H1 (cell line): ENCODE measurements at regions of chr11 and their contacts with region 1.

Region 1: DNA sequence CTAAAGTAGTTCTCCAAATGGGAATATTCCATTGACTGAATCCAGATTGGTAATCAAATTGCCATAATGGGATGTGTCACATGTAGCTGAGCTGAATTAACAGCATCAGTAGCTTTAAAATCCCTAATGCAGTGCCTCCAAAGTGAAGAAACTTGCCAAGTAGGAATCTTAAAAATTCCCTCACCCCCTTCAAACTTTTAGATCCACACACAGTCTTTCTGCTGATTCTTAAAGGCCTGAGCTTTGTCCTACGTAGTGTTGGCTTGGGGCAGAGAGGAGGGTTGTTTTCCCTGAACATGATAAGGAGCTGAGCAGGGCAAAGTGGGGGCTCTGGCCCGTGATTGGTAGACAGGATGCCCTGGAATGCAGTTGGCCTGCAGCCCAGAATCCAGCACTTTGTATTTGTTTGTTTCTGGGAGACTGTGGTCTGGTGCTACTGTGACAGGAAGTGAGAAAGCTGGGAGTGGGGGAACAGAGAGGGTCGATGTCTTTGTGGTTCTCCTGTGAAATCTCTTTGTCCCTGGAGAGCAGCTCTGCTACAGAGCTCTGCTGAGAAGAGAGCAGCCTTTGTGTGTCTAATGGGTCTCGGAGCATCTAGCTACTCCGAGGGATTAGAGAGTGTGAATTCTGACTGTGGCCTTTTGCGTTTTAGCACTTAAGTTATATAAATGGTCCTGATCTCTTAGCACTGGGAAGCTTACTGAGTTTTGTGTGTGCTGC is 16.9 kb downstream of the CTNND1 start:
- DNase-seq: peak; percentile 71 to 79
- H3K4me3 ChIP-seq: peak overlapping the region in 3 of 4 experiments; percentile 5 to 39 (median 16); a peak in 4 of 8 replicates
- H3K27ac ChIP-seq: peak overlapping the region; percentile 89
- H3K4me1 ChIP-seq: peaks cover 23 to 44% (median 38%) of the 10 kb centered on the region in 4 experiments
- H3K27me3 ChIP-seq: no peaks in the 10 kb centered on the region
- CTCF ChIP-seq: no peak
- EP300 ChIP-seq: 0 out of 3 replicates have a peak, but pooled peaks of 1 of the 2 experiments have one; percentile 19
- POLR2A ChIP-seq: peak; percentile 83 to 91
- RAD21 ChIP-seq: peak in 1 of 2 experiments; percentile 0; a peak in 1 of 4 replicates

Region 2: GRCh38 chr11:57619331-57619730 is 159.1 kb before region 1 on chr11:
- CTCF ChIA-PET with region 1: no interaction called
- POLR2A ChIA-PET with region 1: no interaction called
- DNase-seq: no peak
- H3K4me3 ChIP-seq: no peak overlapping the region
- H3K27ac ChIP-seq: no peak overlapping the region
- H3K4me1 ChIP-seq: no peaks in the 10 kb centered on the region
- H3K27me3 ChIP-seq: no peaks in the 10 kb centered on the region
- CTCF ChIP-seq: peak in 2 of 3 experiments; percentile 52 to 72; a peak in 3 of 4 replicates
- EP300 ChIP-seq: no peak
- POLR2A ChIP-seq: no peak
- RAD21 ChIP-seq: peak; percentile 38 to 61

Region 3: GRCh38 chr11:57638005-57638781 is 140.3 kb before region 1 on chr11:
- CTCF ChIA-PET with region 1: no interaction called
- POLR2A ChIA-PET with region 1: interaction called, 10 read pairs
- DNase-seq: peak; percentile 86 to 89
- H3K4me3 ChIP-seq: peak overlapping the region; percentile 94 to 100 (median 98)
- H3K27ac ChIP-seq: peak overlapping the region; percentile 98
- H3K4me1 ChIP-seq: peaks cover 11 to 31% (median 22%) of the 10 kb centered on the region in 4 experiments
- H3K27me3 ChIP-seq: no peaks in the 10 kb centered on the region; a peak in 1 of 7 replicates
- CTCF ChIP-seq: no peak
- EP300 ChIP-seq: peak in 1 of 2 experiments; percentile 64; a peak in 1 of 3 replicates
- POLR2A ChIP-seq: peak; percentile 94 to 95
- RAD21 ChIP-seq: no peak

Region 4: DNA sequence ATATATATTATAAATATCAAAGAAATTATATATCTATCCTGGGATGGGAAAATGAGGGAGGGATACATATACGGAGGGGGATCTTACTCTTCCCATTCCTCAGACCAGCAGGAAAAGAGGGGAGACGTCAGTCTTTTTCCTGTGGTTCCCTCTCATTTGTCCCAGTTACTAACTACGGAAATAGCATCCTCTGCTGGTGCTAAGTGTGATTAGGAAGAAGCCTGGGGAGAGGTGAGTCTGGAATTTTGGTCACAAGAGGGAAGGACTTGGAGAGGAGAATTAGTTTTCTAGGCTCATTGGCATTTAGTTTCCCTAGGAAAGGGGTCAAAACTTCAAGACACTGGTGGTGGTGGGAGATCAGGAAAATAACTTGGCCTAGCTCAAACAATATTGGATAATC is 78.1 kb before region 1 on chr11:
- CTCF ChIA-PET with region 1: no interaction called
- POLR2A ChIA-PET with region 1: no interaction called
- DNase-seq: no peak
- H3K4me3 ChIP-seq: no peak overlapping the region
- H3K27ac ChIP-seq: no peak overlapping the region
- H3K4me1 ChIP-seq: no peaks in the 10 kb centered on the region
- H3K27me3 ChIP-seq: no peaks in the 10 kb centered on the region
- CTCF ChIP-seq: peak in 1 of 3 experiments; percentile 36; a peak in 1 of 4 replicates
- EP300 ChIP-seq: no peak
- POLR2A ChIP-seq: no peak
- RAD21 ChIP-seq: peak in 1 of 2 experiments; percentile 33; a peak in 1 of 4 replicates

Region 5: DNA sequence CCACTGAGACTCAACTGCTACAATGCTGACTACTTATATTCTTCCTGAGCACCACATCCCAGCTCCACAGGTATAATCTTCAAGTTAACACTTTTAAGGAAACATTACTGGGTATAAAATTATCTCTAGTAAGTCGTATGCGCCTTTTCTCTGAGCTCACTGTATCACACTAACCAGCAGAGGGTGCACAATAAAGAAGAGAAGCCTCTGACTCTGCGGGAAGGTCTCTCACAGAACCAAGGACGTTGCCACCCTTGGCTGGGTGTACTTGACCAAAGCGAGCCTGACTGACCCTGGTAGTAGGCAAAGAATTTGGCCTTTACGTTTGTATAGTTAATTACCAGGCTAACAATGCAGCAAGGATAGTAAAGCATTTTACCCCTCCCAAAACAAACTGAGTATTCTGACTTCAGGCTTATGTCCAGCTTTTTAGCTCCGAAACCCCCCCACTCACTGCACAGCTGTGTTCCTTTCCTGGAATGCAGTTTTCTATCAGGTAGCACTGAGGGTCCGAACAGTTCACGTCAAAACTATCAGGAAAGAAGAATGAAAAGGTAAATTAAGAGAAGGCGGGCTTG is 26.7 kb before region 1 on chr11 and contains the start of gene BTBD18:
- CTCF ChIA-PET with region 1: interaction called, 16 read pairs
- POLR2A ChIA-PET with region 1: interaction called, 329 read pairs
- DNase-seq: peak in 1 of 2 experiments; percentile 54
- H3K4me3 ChIP-seq: no peak within 1 kb of the TSS
- H3K27ac ChIP-seq: no peak within 1 kb of the TSS; the same call in 1 of the 2 replicates
- H3K4me1 ChIP-seq: no peaks in the 10 kb centered on the region; a peak in 1 of 7 replicates
- H3K27me3 ChIP-seq: no peaks in the 10 kb centered on the region
- CTCF ChIP-seq: peak in 2 of 3 experiments; percentile 58 to 61; a peak in 3 of 4 replicates
- EP300 ChIP-seq: no peak
- POLR2A ChIP-seq: no peak
- RAD21 ChIP-seq: peak; percentile 62 to 78
- total RNA-seq, gene BTBD18: not detected in 2 replicates

Region 6: GRCh38 chr11:57761301-57762234 is 16.9 kb before region 1 on chr11 and contains the start of gene CTNND1:
- CTCF ChIA-PET with region 1: interaction called, 86 read pairs
- POLR2A ChIA-PET with region 1: interaction called, 329 read pairs
- DNase-seq: peak; percentile 71 to 84
- H3K4me3 ChIP-seq: peak within 1 kb of the TSS; percentile 88 to 97 (median 91)
- H3K27ac ChIP-seq: peak within 1 kb of the TSS; percentile 93
- H3K4me1 ChIP-seq: peaks cover 0 to 10% (median 2%) of the 10 kb centered on the region in 4 experiments; a peak in 1 of 7 replicates
- H3K27me3 ChIP-seq: no peaks in the 10 kb centered on the region
- CTCF ChIP-seq: no peak
- EP300 ChIP-seq: no peak; a peak in 1 of 3 replicates
- POLR2A ChIP-seq: peak; percentile 84 to 91
- RAD21 ChIP-seq: peak; percentile 3; a peak in 1 of 4 replicates
- total RNA-seq, gene CTNND1: 164 and 167 TPM in 2 replicates

Region 7: DNA sequence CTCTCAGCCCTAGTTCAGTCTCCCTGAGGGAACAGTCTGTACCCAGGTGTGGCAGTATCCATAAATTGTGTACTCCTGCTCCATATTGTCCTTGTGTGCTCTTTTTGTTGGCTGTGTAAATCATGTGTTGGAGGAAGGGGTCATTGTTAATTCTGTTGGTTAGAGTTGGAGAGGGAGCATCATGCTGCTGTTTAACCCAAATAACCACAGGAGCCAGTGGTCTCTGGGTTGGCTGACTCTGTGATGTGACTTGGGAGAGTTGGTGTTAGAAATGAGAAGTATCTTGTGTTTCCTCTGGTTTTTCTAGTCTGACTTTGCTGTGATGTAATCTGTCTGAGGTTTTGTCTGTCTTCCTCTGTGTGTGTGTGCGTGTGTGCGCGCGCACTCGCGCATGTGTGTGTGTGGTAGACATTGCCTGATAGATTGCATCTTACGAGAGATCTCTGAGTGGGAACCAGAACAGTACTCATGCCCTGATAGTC is 13.6 kb after region 1 on chr11:
- CTCF ChIA-PET with region 1: interaction called, 4 read pairs
- POLR2A ChIA-PET with region 1: interaction called, 42 read pairs
- DNase-seq: no peak
- H3K4me3 ChIP-seq: no peak overlapping the region
- H3K27ac ChIP-seq: no peak overlapping the region
- H3K4me1 ChIP-seq: peaks cover 0 to 9% (median 3%) of the 10 kb centered on the region in 4 experiments; a peak in 3 of 7 replicates
- H3K27me3 ChIP-seq: no peaks in the 10 kb centered on the region
- CTCF ChIP-seq: no peak
- EP300 ChIP-seq: no peak
- POLR2A ChIP-seq: no peak
- RAD21 ChIP-seq: no peak

Region 8: GRCh38 chr11:57800444-57801182 is 22.1 kb after region 1 on chr11:
- CTCF ChIA-PET with region 1: interaction called, 17 read pairs
- POLR2A ChIA-PET with region 1: interaction called, 19 read pairs
- DNase-seq: no peak
- H3K4me3 ChIP-seq: no peak overlapping the region
- H3K27ac ChIP-seq: no peak overlapping the region
- H3K4me1 ChIP-seq: peaks cover 0 to 2% (median 0%) of the 10 kb centered on the region in 4 experiments; a peak in 2 of 7 replicates
- H3K27me3 ChIP-seq: no peaks in the 10 kb centered on the region
- CTCF ChIP-seq: peak in 2 of 3 experiments; percentile 66 to 83; a peak in 3 of 4 replicates
- EP300 ChIP-seq: no peak
- POLR2A ChIP-seq: no peak
- RAD21 ChIP-seq: peak; percentile 95 to 97